ENCODE measurements at regions of chr11 and their contacts with region 1.

Region 1: DNA sequence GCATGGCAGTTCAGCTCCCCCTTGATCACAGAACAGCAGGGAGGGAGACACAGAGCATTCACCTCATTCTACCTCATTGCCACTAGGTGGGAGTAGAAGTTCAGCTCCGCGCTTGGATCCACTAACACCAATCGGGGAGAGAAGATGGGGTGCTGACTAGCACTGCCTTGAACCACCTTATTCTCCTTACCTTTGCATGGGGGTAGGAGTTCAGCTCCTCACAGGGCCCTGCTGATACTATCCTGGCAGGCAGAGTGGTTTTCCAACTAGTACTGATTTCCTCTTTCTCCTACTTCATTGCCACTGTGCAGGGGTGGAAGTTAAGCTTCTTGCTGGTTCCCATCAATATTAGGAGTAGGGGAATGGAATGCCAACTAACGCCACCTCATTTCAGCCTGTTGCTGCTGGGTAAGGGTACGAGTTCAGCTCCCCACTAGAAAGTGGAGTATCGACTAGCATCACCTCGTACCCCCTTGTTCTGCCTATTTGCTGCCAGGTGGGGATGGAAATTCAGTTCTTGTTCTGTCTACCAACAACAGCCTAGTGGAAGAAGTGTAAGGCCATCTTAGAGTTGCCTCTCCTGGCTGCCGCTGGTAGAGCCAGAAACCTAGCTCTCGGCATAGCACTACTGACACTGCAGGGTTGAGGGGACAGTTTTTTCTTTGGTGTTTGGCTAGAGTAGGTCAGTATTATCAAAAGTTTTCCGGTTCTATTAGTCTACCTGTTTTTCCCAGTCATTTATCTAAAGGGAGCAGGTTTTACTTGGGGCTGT is 550.9 kb upstream of the CCDC90B start:
- DNase-seq: peak; percentile 69
- H3K4me3 ChIP-seq: no peak overlapping the region
- H3K27ac ChIP-seq: peak overlapping the region in 1 of 2 experiments; percentile 60; a peak in 1 of 4 replicates
- H3K4me1 ChIP-seq: peaks cover 0 to 6% of the 10 kb centered on the region in 2 experiments; a peak in 1 of 4 replicates
- H3K27me3 ChIP-seq: no peaks in the 10 kb centered on the region
- CTCF ChIP-seq: peak; percentile 84
- EP300 ChIP-seq: no peak
- RAD21 ChIP-seq: peak; percentile 98

Region 2: GRCh38 chr11:83778598-83778997 is 58.5 kb before region 1 on chr11:
- CTCF ChIA-PET with region 1: no interaction called
- POLR2A ChIA-PET with region 1: no interaction called
- DNase-seq: no peak
- H3K4me3 ChIP-seq: no peak overlapping the region
- H3K27ac ChIP-seq: no peak overlapping the region
- H3K4me1 ChIP-seq: peaks cover 4 to 33% of the 10 kb centered on the region in 2 experiments; a peak in 3 of 4 replicates
- H3K27me3 ChIP-seq: no peaks in the 10 kb centered on the region
- CTCF ChIP-seq: no peak
- EP300 ChIP-seq: no peak
- RAD21 ChIP-seq: no peak

Region 3: DNA sequence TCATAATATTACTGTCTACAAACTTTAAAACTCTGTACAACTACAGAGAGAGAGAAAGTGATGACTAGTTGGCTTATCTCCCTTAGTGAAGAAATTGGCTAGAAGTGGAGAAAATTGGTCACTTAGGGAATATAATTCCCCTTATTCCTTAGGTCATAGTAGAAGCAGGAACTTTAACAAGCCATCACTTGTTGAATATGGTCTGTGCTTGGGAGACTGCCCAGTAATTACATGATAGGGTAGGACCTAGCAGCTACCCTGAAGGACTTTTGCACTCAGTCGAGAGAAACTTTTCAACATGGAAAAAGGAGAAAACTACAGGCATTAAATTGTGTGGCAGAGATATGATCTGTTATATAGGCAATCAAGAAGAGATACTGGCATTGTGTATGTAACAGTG is 25.6 kb after region 1 on chr11:
- CTCF ChIA-PET with region 1: interaction called, 11 read pairs
- POLR2A ChIA-PET with region 1: no interaction called
- DNase-seq: no peak
- H3K4me3 ChIP-seq: no peak overlapping the region
- H3K27ac ChIP-seq: peak overlapping the region in 1 of 2 experiments; percentile 85; a peak in 2 of 4 replicates
- H3K4me1 ChIP-seq: peaks cover 6 to 23% of the 10 kb centered on the region in 2 experiments
- H3K27me3 ChIP-seq: no peaks in the 10 kb centered on the region
- CTCF ChIP-seq: no peak
- EP300 ChIP-seq: no peak
- RAD21 ChIP-seq: no peak

Region 4: DNA sequence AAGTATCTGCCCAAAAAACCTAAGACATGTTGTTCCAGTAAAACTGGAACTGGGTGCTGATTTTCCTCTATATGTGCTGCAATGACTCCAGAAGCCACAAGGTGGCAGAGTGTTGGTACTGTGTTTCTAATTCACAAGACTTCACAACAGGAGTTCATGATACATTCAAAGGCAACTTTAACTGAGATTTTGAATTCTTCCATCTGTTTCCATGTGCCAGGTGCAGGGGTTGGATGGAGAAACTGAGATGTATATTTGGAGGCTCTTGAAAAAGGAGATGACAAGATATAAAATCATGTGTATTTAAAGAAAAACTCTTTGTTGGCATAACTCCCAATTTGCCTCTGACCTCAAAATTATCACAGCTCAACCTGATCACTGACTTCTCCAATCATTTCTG is 547.7 kb after region 1 on chr11:
- CTCF ChIA-PET with region 1: interaction called, 59 read pairs
- POLR2A ChIA-PET with region 1: no interaction called
- DNase-seq: peak; percentile 25
- H3K4me3 ChIP-seq: no peak overlapping the region; a peak in 1 of 4 replicates
- H3K27ac ChIP-seq: no peak overlapping the region
- H3K4me1 ChIP-seq: peaks cover 0 to 3% of the 10 kb centered on the region in 2 experiments; a peak in 2 of 4 replicates
- H3K27me3 ChIP-seq: no peaks in the 10 kb centered on the region
- CTCF ChIP-seq: peak; percentile 85
- EP300 ChIP-seq: no peak
- RAD21 ChIP-seq: peak; percentile 70

Region 5: GRCh38 chr11:84524422-84525051 is 687.5 kb after region 1 on chr11:
- CTCF ChIA-PET with region 1: interaction called, 156 read pairs
- POLR2A ChIA-PET with region 1: no interaction called
- DNase-seq: peak; percentile 36
- H3K4me3 ChIP-seq: no peak overlapping the region
- H3K27ac ChIP-seq: no peak overlapping the region; a peak in 1 of 4 replicates
- H3K4me1 ChIP-seq: peaks cover 0 to under 1% of the 10 kb centered on the region in 2 experiments; a peak in 2 of 4 replicates
- H3K27me3 ChIP-seq: no peaks in the 10 kb centered on the region
- CTCF ChIP-seq: peak; percentile 81
- EP300 ChIP-seq: no peak
- RAD21 ChIP-seq: peak; percentile 80

Region 6: GRCh38 chr11:84558085-84558905 is 721.2 kb after region 1 on chr11:
- CTCF ChIA-PET with region 1: interaction called, 57 read pairs
- POLR2A ChIA-PET with region 1: no interaction called
- DNase-seq: peak; percentile 27
- H3K4me3 ChIP-seq: no peak overlapping the region; a peak in 1 of 4 replicates
- H3K27ac ChIP-seq: no peak overlapping the region
- H3K4me1 ChIP-seq: no peaks in the 10 kb centered on the region
- H3K27me3 ChIP-seq: no peaks in the 10 kb centered on the region
- CTCF ChIP-seq: peak; percentile 87
- EP300 ChIP-seq: no peak
- RAD21 ChIP-seq: peak; percentile 82